Naive thymus-derived CD4-positive, alpha-beta T cell (primary cell): ENCODE measurements at regions of chr1 and their contacts with region 1.

Region 1: GRCh38 chr1:234842726-234843641 is 233.0 kb upstream of the IRF2BP2 start:
- DNase-seq: peak in 8 of 9 donors; percentile 7 to 81 (median 30)
- ATAC-seq: peak; percentile 26
- H3K4me3 ChIP-seq: peak overlapping the region; percentile 5
- H3K4me3 Mint-ChIP-seq: peak overlapping the region; percentile 30 to 77 (median 62)
- H3K27ac ChIP-seq: peak overlapping the region; percentile 15
- H3K27ac Mint-ChIP-seq: peak overlapping the region; percentile 30 to 90 (median 77)
- H3K4me1 ChIP-seq: peaks cover 36 to 57% of the 10 kb centered on the region in 2 donors
- H3K4me1 Mint-ChIP-seq: peaks cover 44 to 89% (median 74%) of the 10 kb centered on the region in 7 donors
- H3K27me3 ChIP-seq: no peaks in the 10 kb centered on the region
- H3K27me3 Mint-ChIP-seq: no peaks in the 10 kb centered on the region

Region 2: GRCh38 chr1:234599617-234600417 is 243.2 kb before region 1 on chr1:
- CTCF ChIA-PET with region 1: no interaction called
- POLR2A ChIA-PET with region 1: no interaction called
- intact Hi-C with region 1: loop called in 1 of 2 experiments (anchors 1 kb)
- DNase-seq: peak; percentile 52 to 88 (median 62)
- ATAC-seq: peak; percentile 74
- H3K4me3 ChIP-seq: peak overlapping the region; percentile 61
- H3K4me3 Mint-ChIP-seq: peak overlapping the region; percentile 75 to 97 (median 89)
- H3K27ac ChIP-seq: peak overlapping the region; percentile 96
- H3K27ac Mint-ChIP-seq: peak overlapping the region; percentile 87 to 99 (median 95)
- H3K4me1 ChIP-seq: peaks cover 51 to 54% of the 10 kb centered on the region in 2 donors
- H3K4me1 Mint-ChIP-seq: peaks cover 24 to 68% (median 56%) of the 10 kb centered on the region in 7 donors
- H3K27me3 ChIP-seq: no peaks in the 10 kb centered on the region
- H3K27me3 Mint-ChIP-seq: no peaks in the 10 kb centered on the region

Region 3: DNA sequence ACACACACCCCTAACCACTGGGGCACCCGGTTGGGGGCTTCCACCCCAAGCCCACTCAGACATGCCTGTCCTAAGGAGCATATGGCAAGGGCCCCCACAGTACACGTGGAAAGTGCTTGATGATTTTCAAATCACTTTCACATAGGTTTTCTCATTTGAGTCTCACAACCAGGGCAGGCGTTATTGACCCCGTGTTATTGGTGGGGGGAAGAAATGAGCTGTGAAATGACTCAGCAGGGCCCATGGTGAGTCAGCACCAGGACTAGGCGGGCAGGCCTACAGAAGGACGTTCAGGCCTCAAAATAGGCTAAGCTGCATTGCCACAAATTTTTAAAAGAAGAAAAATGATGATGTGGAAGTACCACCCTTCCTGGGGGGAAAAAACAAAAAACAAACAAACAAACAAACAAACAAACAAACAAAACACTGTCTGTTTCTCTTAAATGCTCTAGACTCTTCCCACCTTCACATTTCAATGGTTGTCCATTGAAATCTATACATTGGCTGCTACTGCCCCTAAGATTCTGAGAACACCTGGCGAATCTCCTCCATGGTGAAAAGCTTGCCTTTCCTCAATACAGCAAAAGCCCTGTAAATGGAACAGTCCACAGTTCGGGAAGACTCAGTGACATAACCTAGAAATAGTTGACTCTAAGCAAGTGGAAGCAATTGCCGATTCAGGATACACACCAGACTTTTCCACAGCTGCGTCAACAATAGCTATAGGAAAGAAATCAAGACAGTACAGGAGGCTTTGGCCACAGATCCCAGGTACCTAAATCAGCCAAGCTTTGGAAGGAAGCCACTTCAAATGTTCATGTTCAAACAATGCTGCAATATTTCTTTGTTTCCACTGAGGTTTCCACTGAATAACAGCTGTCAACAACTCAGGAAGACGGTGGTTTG is 51.0 kb after region 1 on chr1:
- CTCF ChIA-PET with region 1: no interaction called
- POLR2A ChIA-PET with region 1: no interaction called
- intact Hi-C with region 1: loop called in 1 of 2 experiments (anchors 5 kb)
- DNase-seq: peak in 2 of 9 donors; percentile 12 to 34
- ATAC-seq: no peak
- H3K4me3 ChIP-seq: no peak overlapping the region
- H3K4me3 Mint-ChIP-seq: peak overlapping the region in 2 of 10 donors; percentile 33 to 42
- H3K27ac ChIP-seq: no peak overlapping the region
- H3K27ac Mint-ChIP-seq: peak overlapping the region in 5 of 9 donors; percentile 6 to 78 (median 32)
- H3K4me1 ChIP-seq: no peaks in the 10 kb centered on the region
- H3K4me1 Mint-ChIP-seq: peaks cover 11 to 60% (median 22%) of the 10 kb centered on the region in 7 donors
- H3K27me3 ChIP-seq: no peaks in the 10 kb centered on the region
- H3K27me3 Mint-ChIP-seq: no peaks in the 10 kb centered on the region

Region 4: GRCh38 chr1:234963180-234963903 is 120.4 kb after region 1 on chr1:
- CTCF ChIA-PET with region 1: no interaction called
- POLR2A ChIA-PET with region 1: no interaction called
- intact Hi-C with region 1: loop called (anchors 1 kb)
- DNase-seq: peak; percentile 55 to 90 (median 75)
- ATAC-seq: peak; percentile 93
- H3K4me3 ChIP-seq: peak overlapping the region; percentile 41
- H3K4me3 Mint-ChIP-seq: peak overlapping the region; percentile 68 to 87 (median 80)
- H3K27ac ChIP-seq: peak overlapping the region; percentile 79
- H3K27ac Mint-ChIP-seq: peak overlapping the region; percentile 88 to 97 (median 93)
- H3K4me1 ChIP-seq: peaks cover 36 to 55% of the 10 kb centered on the region in 2 donors
- H3K4me1 Mint-ChIP-seq: peaks cover 55 to 75% (median 69%) of the 10 kb centered on the region in 7 donors
- H3K27me3 ChIP-seq: no peaks in the 10 kb centered on the region
- H3K27me3 Mint-ChIP-seq: no peaks in the 10 kb centered on the region

Region 5: GRCh38 chr1:235075188-235075926 is 232.4 kb after region 1 on chr1:
- CTCF ChIA-PET with region 1: no interaction called
- POLR2A ChIA-PET with region 1: no interaction called
- intact Hi-C with region 1: loop called in 1 of 2 experiments (anchors 10 kb)
- DNase-seq: peak in 1 of 9 donors; percentile 76
- ATAC-seq: peak; percentile 44
- H3K4me3 ChIP-seq: peak overlapping the region; percentile 31
- H3K4me3 Mint-ChIP-seq: peak overlapping the region in 1 of 10 donors; percentile 65
- H3K27ac ChIP-seq: no peak overlapping the region
- H3K27ac Mint-ChIP-seq: peak overlapping the region in 1 of 9 donors; percentile 90
- H3K4me1 ChIP-seq: peaks cover 0 to 10% of the 10 kb centered on the region in 2 donors
- H3K4me1 Mint-ChIP-seq: peaks cover 0 to 38% (median 6%) of the 10 kb centered on the region in 7 donors
- H3K27me3 ChIP-seq: no peaks in the 10 kb centered on the region
- H3K27me3 Mint-ChIP-seq: no peaks in the 10 kb centered on the region

Region 6: DNA sequence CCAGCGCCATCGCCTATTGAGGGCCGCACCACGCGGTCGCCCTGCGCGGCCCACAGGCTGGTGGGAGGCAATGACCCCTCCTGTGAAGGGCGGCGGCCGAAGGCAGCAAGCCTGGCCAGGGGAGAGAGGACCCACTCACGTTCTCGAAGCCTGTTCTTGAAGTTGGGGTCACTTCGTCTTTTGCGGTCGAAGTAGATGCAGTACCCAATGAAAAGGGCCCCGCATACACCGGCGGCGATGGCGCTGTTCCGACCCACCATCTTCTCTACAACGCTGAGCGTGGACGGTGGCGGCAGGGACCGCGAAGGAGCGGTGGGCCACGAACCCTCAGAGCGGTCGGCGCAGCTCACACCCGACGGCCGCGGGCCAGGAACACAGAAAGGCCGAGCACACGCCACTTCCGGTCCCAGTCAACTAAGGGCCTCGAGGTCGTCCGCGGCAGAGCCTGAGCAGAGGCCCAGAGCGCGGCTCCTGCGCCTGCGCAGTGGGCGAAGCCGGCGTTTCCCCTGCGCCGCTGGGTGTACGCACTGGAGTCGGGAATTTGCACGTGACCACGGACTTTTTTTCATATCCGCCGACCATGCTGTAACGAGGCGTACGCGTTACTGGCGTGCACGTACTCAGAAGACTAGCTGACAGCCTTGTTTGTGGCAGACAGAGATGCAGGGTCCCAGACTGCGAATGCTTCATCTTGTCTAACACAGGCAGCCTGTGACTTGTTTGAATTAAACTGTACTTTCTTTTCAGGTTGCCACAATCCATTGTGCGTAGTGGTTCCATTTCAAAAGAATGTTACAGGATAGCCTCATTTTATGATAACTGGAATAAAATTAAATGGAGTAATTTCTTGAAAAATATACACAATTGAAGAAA is 285.7 kb after region 1 on chr1 and contains the start of gene TOMM20:
- CTCF ChIA-PET with region 1: no interaction called
- POLR2A ChIA-PET with region 1: no interaction called
- intact Hi-C with region 1: no loop called
- DNase-seq: peak; percentile 91 to 97 (median 95)
- ATAC-seq: peak; percentile 97
- H3K4me3 ChIP-seq: peak within 1 kb of the TSS; percentile 98
- H3K4me3 Mint-ChIP-seq: peak within 1 kb of the TSS; percentile 88 to 99 (median 96)
- H3K27ac ChIP-seq: peak within 1 kb of the TSS; percentile 94
- H3K27ac Mint-ChIP-seq: peak within 1 kb of the TSS; percentile 93 to 99 (median 98)
- H3K4me1 ChIP-seq: peaks cover 22 to 24% of the 10 kb centered on the region in 2 donors
- H3K4me1 Mint-ChIP-seq: peaks cover 17 to 55% (median 42%) of the 10 kb centered on the region in 7 donors
- H3K27me3 ChIP-seq: no peaks in the 10 kb centered on the region
- H3K27me3 Mint-ChIP-seq: no peaks in the 10 kb centered on the region
- total RNA-seq, gene TOMM20: 88.0 to 124 (median 100) TPM